Caco-2 (cell line): ENCODE measurements at regions of chr1 and their contacts with region 1.

Region 1: GRCh38 chr1:179121159-179121938 is 39.5 kb downstream of the TOR3A start:
- DNase-seq: peak in 1 of 2 experiments; percentile 53
- H3K4me3 ChIP-seq: no peak overlapping the region
- H3K4me3 Mint-ChIP-seq: no peak overlapping the region
- H3K27ac Mint-ChIP-seq: no peak overlapping the region
- H3K4me1 ChIP-seq: no peaks in the 10 kb centered on the region
- H3K4me1 Mint-ChIP-seq: no peaks in the 10 kb centered on the region
- H3K27me3 ChIP-seq: no peaks in the 10 kb centered on the region
- H3K27me3 Mint-ChIP-seq: no peaks in the 10 kb centered on the region
- CTCF ChIP-seq: peak; percentile 66 to 77

Region 2: GRCh38 chr1:179142889-179143299 is 21.5 kb after region 1 on chr1:
- CTCF ChIA-PET with region 1: no interaction called
- POLR2A ChIA-PET with region 1: no interaction called
- intact Hi-C with region 1: no loop called
- DNase-seq: peak in 1 of 2 experiments; percentile 48
- H3K4me3 ChIP-seq: no peak overlapping the region
- H3K4me3 Mint-ChIP-seq: no peak overlapping the region
- H3K27ac Mint-ChIP-seq: no peak overlapping the region
- H3K4me1 ChIP-seq: peaks cover 13% of the 10 kb centered on the region; the same call in 1 of the 2 replicates
- H3K4me1 Mint-ChIP-seq: peaks cover 7% of the 10 kb centered on the region
- H3K27me3 ChIP-seq: no peaks in the 10 kb centered on the region
- H3K27me3 Mint-ChIP-seq: no peaks in the 10 kb centered on the region
- CTCF ChIP-seq: no peak

Region 3: DNA sequence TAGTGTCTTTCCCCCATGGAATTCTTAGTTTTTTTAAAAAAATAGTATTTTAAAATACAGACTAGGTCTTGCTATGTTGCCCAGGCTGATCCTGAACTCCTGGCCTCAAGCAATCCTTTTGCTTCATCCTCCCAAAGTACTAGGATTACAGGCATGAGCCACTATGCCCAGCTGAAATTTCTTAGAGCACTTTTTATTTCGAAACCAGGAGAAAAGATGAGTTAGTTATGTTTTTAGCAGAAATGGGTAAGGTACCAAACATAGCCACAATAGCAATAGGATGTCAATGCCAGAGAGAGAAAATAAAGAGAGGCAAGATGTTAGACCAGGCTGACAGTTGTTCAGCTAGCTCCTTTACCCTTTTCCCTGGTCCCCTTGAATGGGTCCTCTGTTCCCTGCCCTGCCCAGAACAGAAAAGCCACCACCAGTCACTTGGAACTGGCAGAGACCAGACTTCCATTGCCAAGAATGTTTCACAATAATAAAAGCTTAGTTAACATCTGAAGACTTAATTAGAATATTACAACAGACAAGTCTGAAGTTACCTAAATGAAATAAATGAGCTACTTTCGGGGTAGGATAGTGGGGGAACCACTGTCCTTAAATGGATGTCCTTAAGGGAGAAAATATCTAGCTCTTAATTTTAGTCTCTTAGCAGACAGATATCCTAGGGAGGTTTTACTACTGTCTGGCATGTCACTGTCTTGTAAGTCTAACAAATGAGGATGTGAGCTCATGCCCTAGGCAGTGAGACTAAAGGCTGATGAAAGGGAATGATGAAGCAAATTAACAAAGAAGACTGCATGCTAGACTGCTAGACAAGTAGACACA is 53.9 kb after region 1 on chr1:
- CTCF ChIA-PET with region 1: no interaction called
- POLR2A ChIA-PET with region 1: no interaction called
- intact Hi-C with region 1: no loop called
- DNase-seq: no peak
- H3K4me3 ChIP-seq: no peak overlapping the region
- H3K4me3 Mint-ChIP-seq: no peak overlapping the region
- H3K27ac Mint-ChIP-seq: no peak overlapping the region
- H3K4me1 ChIP-seq: no peaks in the 10 kb centered on the region
- H3K4me1 Mint-ChIP-seq: peaks cover 6% of the 10 kb centered on the region
- H3K27me3 ChIP-seq: no peaks in the 10 kb centered on the region
- H3K27me3 Mint-ChIP-seq: no peaks in the 10 kb centered on the region
- CTCF ChIP-seq: no peak

Region 4: GRCh38 chr1:179190861-179191260 is 69.5 kb after region 1 on chr1:
- CTCF ChIA-PET with region 1: no interaction called
- POLR2A ChIA-PET with region 1: no interaction called
- intact Hi-C with region 1: loop called (anchors 1 kb)
- DNase-seq: no peak
- H3K4me3 ChIP-seq: no peak overlapping the region
- H3K4me3 Mint-ChIP-seq: no peak overlapping the region
- H3K27ac Mint-ChIP-seq: no peak overlapping the region
- H3K4me1 ChIP-seq: no peaks in the 10 kb centered on the region
- H3K4me1 Mint-ChIP-seq: no peaks in the 10 kb centered on the region
- H3K27me3 ChIP-seq: no peaks in the 10 kb centered on the region
- H3K27me3 Mint-ChIP-seq: no peaks in the 10 kb centered on the region
- CTCF ChIP-seq: no peak

Region 5: DNA sequence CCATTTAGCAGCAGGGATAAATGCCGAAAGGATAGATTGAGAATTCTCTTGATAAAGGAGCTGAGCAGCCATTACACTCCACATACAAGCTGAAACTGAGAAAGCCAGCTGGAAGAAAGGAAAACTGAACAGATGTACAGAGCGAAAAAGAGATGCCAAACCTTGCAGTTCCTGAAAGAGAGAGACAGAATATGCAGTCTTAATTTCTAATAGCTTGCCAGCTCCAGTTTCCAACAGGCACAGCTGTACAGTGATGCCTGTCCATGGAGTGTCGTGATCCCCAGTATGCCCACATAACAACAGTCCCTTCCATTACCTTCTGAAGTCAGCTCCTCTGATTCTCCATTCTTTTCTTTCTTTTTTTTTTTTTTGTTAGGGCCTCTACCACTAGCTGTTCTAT is 85.5 kb after region 1 on chr1:
- CTCF ChIA-PET with region 1: no interaction called
- POLR2A ChIA-PET with region 1: interaction called, 3 read pairs
- intact Hi-C with region 1: loop called (anchors 5 kb)
- DNase-seq: no peak
- H3K4me3 ChIP-seq: no peak overlapping the region
- H3K4me3 Mint-ChIP-seq: no peak overlapping the region
- H3K27ac Mint-ChIP-seq: no peak overlapping the region
- H3K4me1 ChIP-seq: peaks cover 24% of the 10 kb centered on the region
- H3K4me1 Mint-ChIP-seq: peaks cover 28% of the 10 kb centered on the region
- H3K27me3 ChIP-seq: no peaks in the 10 kb centered on the region
- H3K27me3 Mint-ChIP-seq: no peaks in the 10 kb centered on the region
- CTCF ChIP-seq: no peak

Region 6: GRCh38 chr1:179365320-179366092 is 244.2 kb after region 1 on chr1 and contains the start of gene AXDND1:
- CTCF ChIA-PET with region 1: no interaction called
- POLR2A ChIA-PET with region 1: no interaction called
- intact Hi-C with region 1: loop called (anchors 1 kb)
- DNase-seq: peak; percentile 86 to 87
- H3K4me3 ChIP-seq: peak within 1 kb of the TSS; percentile 70
- H3K4me3 Mint-ChIP-seq: peak within 1 kb of the TSS; percentile 98
- H3K27ac Mint-ChIP-seq: peak within 1 kb of the TSS; percentile 99
- H3K4me1 ChIP-seq: peaks cover 15% of the 10 kb centered on the region
- H3K4me1 Mint-ChIP-seq: no peaks in the 10 kb centered on the region
- H3K27me3 ChIP-seq: no peaks in the 10 kb centered on the region
- H3K27me3 Mint-ChIP-seq: no peaks in the 10 kb centered on the region
- CTCF ChIP-seq: peak; percentile 14 to 54
- total RNA-seq, gene AXDND1: not detected in 2 replicates